ENCODE measurements at regions of chr1 and their contacts with region 1.

Region 1: GRCh38 chr1:193183019-193183627 is 3.3 kb downstream of the B3GALT2 start:
- DNase-seq: peak in 4 of 14 experiments; percentile 29 to 77 (median 72)
- ATAC-seq: peak; percentile 71
- H3K4me3 ChIP-seq: peak overlapping the region; percentile 43
- H3K4me3 Mint-ChIP-seq: peak overlapping the region; percentile 64
- H3K27ac ChIP-seq: no peak overlapping the region
- H3K27ac Mint-ChIP-seq: peak overlapping the region; percentile 58
- H3K4me1 ChIP-seq: peaks cover 2% of the 10 kb centered on the region
- H3K4me1 Mint-ChIP-seq: peaks cover 83% of the 10 kb centered on the region
- H3K27me3 ChIP-seq: no peaks in the 10 kb centered on the region
- H3K27me3 Mint-ChIP-seq: no peaks in the 10 kb centered on the region
- CTCF ChIP-seq: peak; percentile 97

Region 2: GRCh38 chr1:193406901-193407300 is 223.8 kb after region 1 on chr1:
- CTCF ChIA-PET with region 1: no interaction called
- POLR2A ChIA-PET with region 1: no interaction called
- intact Hi-C with region 1: loop called in 1 of 2 experiments (anchors 5 kb)
- DNase-seq: peak in 4 of 14 experiments; percentile 18 to 70 (median 69)
- ATAC-seq: peak; percentile 74
- H3K4me3 ChIP-seq: no peak overlapping the region
- H3K4me3 Mint-ChIP-seq: no peak overlapping the region
- H3K27ac ChIP-seq: no peak overlapping the region
- H3K27ac Mint-ChIP-seq: peak overlapping the region; percentile 28
- H3K4me1 ChIP-seq: no peaks in the 10 kb centered on the region
- H3K4me1 Mint-ChIP-seq: peaks cover 40% of the 10 kb centered on the region
- H3K27me3 ChIP-seq: no peaks in the 10 kb centered on the region
- H3K27me3 Mint-ChIP-seq: no peaks in the 10 kb centered on the region
- CTCF ChIP-seq: peak; percentile 86

Region 3: GRCh38 chr1:194043984-194044755 is 861.0 kb after region 1 on chr1:
- CTCF ChIA-PET with region 1: no interaction called
- POLR2A ChIA-PET with region 1: no interaction called
- intact Hi-C with region 1: loop called in 1 of 2 experiments (anchors 10 kb)
- DNase-seq: no peak
- ATAC-seq: peak; percentile 49
- H3K4me3 ChIP-seq: no peak overlapping the region
- H3K4me3 Mint-ChIP-seq: no peak overlapping the region
- H3K27ac ChIP-seq: no peak overlapping the region
- H3K27ac Mint-ChIP-seq: peak overlapping the region; percentile 20
- H3K4me1 ChIP-seq: peaks cover 6% of the 10 kb centered on the region
- H3K4me1 Mint-ChIP-seq: peaks cover 49% of the 10 kb centered on the region
- H3K27me3 ChIP-seq: no peaks in the 10 kb centered on the region
- H3K27me3 Mint-ChIP-seq: no peaks in the 10 kb centered on the region
- CTCF ChIP-seq: no peak

Region 4: GRCh38 chr1:194159940-194160339 is 976.8 kb after region 1 on chr1:
- CTCF ChIA-PET with region 1: no interaction called
- POLR2A ChIA-PET with region 1: no interaction called
- intact Hi-C with region 1: loop called in 1 of 2 experiments (anchors 10 kb)
- DNase-seq: no peak
- ATAC-seq: no peak
- H3K4me3 ChIP-seq: no peak overlapping the region
- H3K4me3 Mint-ChIP-seq: no peak overlapping the region
- H3K27ac ChIP-seq: no peak overlapping the region
- H3K27ac Mint-ChIP-seq: no peak overlapping the region
- H3K4me1 ChIP-seq: no peaks in the 10 kb centered on the region
- H3K4me1 Mint-ChIP-seq: no peaks in the 10 kb centered on the region
- H3K27me3 ChIP-seq: no peaks in the 10 kb centered on the region
- H3K27me3 Mint-ChIP-seq: no peaks in the 10 kb centered on the region
- CTCF ChIP-seq: no peak

Region 5: GRCh38 chr1:194295685-194296084 is 1112.6 kb after region 1 on chr1:
- CTCF ChIA-PET with region 1: interaction called, 5 read pairs
- POLR2A ChIA-PET with region 1: interaction called, 4 read pairs
- intact Hi-C with region 1: loop called (anchors 1 to 2 kb)
- DNase-seq: peak in 8 of 14 experiments; percentile 7 to 85 (median 30)
- ATAC-seq: peak; percentile 99
- H3K4me3 ChIP-seq: no peak overlapping the region
- H3K4me3 Mint-ChIP-seq: no peak overlapping the region
- H3K27ac ChIP-seq: no peak overlapping the region
- H3K27ac Mint-ChIP-seq: peak overlapping the region; percentile 13
- H3K4me1 ChIP-seq: peaks cover 4% of the 10 kb centered on the region
- H3K4me1 Mint-ChIP-seq: peaks cover 23% of the 10 kb centered on the region
- H3K27me3 ChIP-seq: no peaks in the 10 kb centered on the region
- H3K27me3 Mint-ChIP-seq: no peaks in the 10 kb centered on the region
- CTCF ChIP-seq: peak; percentile 92